ENCODE measurements at regions of chr20 and their contacts with region 1.

Region 1: DNA sequence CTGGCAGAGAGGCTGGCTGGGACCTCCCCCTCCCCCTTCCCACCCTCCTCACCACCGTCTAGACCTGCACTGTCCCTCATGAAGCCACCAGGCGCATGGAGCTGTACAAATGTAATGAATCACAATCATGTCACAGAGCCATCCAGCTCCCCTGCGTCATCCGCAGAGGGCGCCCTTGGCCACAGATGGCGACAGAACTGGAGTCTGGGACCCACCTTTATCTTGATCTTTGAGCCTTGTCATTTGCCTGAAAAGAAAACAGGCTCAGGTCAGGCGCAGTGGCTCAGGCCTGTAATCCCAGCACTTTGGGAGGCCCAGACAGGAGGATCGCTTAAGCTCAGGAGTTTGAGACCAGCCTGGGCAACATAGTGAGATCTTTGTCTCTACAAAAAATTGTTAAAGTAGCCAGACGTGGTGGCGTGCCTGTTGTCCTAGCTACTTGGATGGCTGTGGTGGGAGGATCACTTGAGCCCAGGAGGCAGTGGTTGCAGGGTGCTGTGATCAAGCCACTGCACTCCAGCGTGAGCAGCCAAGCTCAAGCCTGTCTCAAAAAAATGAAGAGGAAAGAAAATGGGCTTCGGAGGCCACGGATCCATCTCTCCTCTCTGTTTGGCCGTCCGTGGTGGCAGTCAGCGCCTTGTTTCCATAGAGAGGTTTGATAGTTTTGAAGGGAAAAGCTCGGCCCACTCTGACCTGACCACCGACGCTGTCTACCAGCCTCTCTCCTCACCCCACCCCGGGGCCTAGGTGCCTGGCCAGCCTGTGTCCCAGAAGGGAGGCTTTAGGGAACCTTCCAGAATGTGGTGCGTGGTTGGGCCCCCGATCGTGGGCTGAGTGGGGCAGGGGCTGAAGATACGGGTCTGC is 6.2 kb downstream of the COL9A3 start:
- DNase-seq: peak; percentile 71
- ATAC-seq: peak; percentile 29
- H3K4me3 Mint-ChIP-seq: no peak overlapping the region
- H3K27ac Mint-ChIP-seq: peak overlapping the region; percentile 84
- H3K4me1 Mint-ChIP-seq: peaks cover 16% of the 10 kb centered on the region
- H3K27me3 Mint-ChIP-seq: no peaks in the 10 kb centered on the region
- CTCF ChIP-seq: peak; percentile 27; the same call in 1 of the 2 replicates

Region 2: DNA sequence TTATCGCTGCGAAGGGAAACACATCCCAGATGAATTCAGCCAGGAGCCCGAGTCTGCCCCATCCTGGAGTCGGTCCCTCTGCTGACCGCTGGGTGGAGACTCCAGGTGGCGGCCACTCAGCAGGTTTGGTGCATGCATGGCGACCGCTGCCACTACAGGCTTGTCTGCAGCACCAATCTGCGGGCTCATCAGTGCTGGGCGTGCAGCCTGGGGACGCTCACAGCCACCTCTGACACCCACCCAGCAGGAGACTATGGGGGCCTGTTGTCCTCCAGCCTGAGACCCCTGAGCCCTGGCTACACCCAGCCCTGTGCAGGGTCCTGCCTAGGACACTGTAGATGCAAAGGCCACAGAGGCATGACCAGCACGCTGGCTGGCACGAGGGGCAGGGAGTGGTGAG is 306.7 kb before region 1 on chr20:
- CTCF ChIA-PET with region 1: no interaction called
- POLR2A ChIA-PET with region 1: no interaction called
- DNase-seq: peak; percentile 41
- ATAC-seq: peak; percentile 60; the same call in 1 of the 2 replicates
- H3K4me3 Mint-ChIP-seq: no peak overlapping the region
- H3K27ac Mint-ChIP-seq: no peak overlapping the region
- H3K4me1 Mint-ChIP-seq: no peaks in the 10 kb centered on the region; the same call in 1 of the 2 replicates
- H3K27me3 Mint-ChIP-seq: no peaks in the 10 kb centered on the region
- CTCF ChIP-seq: no peak

Region 3: DNA sequence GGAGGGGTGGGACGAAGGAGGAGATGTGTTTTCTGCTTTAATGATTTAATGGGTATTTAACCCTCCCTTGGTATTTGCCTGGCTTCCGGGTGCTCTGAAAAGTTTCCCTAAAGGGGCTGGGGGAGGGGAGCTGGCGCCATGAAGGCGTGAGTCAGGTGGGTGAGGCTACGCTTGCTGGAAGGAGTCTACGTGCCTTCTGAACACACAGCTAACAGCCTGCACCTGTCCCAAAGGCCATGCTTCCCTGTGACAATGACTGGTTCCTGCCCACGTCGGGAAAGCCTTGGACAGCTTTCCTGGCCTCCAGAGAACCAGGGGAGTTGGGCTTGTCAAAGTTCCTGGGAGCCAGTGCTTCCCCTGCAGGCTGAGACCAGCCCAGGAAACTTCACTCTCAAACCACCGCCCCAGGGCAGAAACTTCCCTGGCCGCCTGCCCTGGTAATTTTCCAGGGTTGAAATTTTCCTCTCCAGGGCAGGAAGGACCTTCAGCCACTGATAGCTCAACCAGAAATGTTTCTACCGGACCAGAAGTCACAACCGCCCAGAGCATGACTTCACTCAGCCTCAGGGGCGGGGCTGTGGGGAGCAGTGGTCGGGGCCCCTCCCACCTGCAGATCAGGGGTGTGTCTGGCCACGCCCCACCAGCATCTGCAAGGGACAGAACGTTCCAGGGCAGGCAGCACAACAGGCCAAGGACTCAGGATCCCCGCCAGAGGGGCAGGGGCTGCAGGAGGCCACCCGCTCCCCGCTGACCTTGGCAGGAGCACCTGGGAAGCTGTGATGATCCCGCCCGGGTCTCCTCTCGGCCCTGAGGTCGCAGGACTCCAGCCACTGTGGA is 199.3 kb before region 1 on chr20:
- CTCF ChIA-PET with region 1: no interaction called
- POLR2A ChIA-PET with region 1: no interaction called
- DNase-seq: peak; percentile 90
- ATAC-seq: peak; percentile 93
- H3K4me3 Mint-ChIP-seq: peak overlapping the region; percentile 46
- H3K27ac Mint-ChIP-seq: peak overlapping the region; percentile 80
- H3K4me1 Mint-ChIP-seq: peaks cover 25% of the 10 kb centered on the region
- H3K27me3 Mint-ChIP-seq: no peaks in the 10 kb centered on the region
- CTCF ChIP-seq: no peak

Region 4: DNA sequence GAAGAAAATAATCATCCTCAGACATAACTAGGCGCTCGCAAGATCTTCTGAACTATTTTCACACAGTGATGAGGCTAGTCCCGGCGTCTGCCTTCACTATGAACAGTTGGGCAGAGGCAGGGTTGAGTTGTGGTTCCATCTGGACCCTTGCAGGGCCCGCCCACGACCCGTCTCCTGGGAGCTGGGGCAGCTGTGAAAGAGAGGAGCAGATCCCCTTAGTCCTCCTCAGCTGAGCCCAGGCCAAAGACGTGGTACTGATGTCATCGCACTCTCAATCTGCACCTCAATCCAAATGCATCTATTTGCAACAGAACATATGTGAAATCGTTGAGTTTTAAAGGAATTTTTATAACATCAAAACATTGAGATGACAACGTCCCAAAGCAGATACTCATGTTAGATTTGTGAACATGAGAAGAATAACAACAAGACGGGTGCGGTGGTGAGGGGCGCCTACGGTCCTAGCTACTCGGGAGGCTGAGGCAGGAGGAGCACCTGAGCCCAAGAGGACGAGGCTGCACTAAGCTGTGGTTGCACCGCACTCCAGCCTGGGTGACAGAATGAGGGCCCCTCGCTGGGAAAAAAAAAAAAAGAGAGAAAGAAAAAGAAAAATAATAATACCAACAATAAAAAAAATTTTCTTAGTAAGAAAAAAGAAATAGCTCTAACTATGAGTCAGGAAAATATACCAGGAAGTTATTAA is 23.3 kb after region 1 on chr20:
- CTCF ChIA-PET with region 1: interaction called, 19 read pairs
- POLR2A ChIA-PET with region 1: no interaction called
- DNase-seq: no peak
- ATAC-seq: no peak
- H3K4me3 Mint-ChIP-seq: no peak overlapping the region
- H3K27ac Mint-ChIP-seq: peak overlapping the region; percentile 27
- H3K4me1 Mint-ChIP-seq: peaks cover 13% of the 10 kb centered on the region
- H3K27me3 Mint-ChIP-seq: no peaks in the 10 kb centered on the region
- CTCF ChIP-seq: no peak

Region 5: GRCh38 chr20:62861726-62862336 is 38.8 kb after region 1 on chr20 and contains the start of gene TCFL5:
- CTCF ChIA-PET with region 1: interaction called, 13 read pairs
- POLR2A ChIA-PET with region 1: no interaction called
- DNase-seq: peak; percentile 81
- ATAC-seq: peak; percentile 79
- H3K4me3 Mint-ChIP-seq: peak within 1 kb of the TSS; percentile 74
- H3K27ac Mint-ChIP-seq: peak within 1 kb of the TSS; percentile 53
- H3K4me1 Mint-ChIP-seq: peaks cover 28% of the 10 kb centered on the region
- H3K27me3 Mint-ChIP-seq: peaks cover 3% of the 10 kb centered on the region; the same call in 1 of the 2 replicates
- CTCF ChIP-seq: no peak
- total RNA-seq, gene TCFL5: 19.7 to 20.4 TPM (median 20.3 TPM) in 3 replicates